Right ventricle myocardium inferior (tissue), 1 donor: ENCODE measurements at regions of chr3 and their contacts with region 1.

Region 1: DNA sequence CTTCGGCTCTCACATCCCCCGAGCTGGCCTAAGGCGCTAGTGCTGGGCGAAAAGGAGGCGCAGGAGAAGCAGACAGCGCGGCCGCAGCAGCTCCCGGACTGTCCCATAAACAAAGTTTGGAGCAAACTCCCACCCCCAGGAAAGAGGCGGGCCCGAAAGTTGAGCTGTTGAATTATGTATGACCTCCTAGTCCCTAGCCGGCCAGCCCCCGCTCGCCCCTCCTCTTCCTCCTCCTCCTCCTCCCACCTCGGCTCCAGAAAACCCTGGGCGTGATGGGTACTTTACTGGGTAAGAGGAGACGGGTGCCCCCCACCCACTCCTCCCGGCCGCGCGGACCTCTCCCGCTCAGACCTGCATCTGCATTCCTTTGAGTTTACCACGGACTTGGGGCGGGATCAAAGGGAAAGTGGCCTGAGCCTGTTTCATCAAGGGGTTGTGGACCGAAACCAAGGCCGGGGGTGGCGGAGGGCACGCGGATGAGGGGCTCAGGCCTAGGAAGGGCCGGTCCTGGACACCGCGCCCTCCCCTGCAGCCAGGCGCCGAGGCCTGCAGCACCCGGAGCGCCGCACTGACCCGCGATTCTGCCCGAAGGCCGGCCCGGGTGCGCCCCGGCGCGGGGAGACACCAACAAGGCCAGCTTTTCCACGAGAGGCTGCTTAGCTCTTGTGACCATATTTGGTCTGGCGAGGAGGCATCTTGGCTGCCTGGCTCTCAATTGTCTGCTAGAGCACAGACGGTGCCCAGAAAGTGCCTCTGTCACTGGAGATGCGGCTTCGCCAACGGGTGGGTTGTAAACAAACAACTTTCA is at the start of gene WWTR1:
- DNase-seq: peak; percentile 95
- ATAC-seq: peak; percentile 93
- total RNA-seq, gene WWTR1: 42.6 TPM

Region 2: GRCh38 chr3:149536429-149536828 is 121.7 kb before region 1 on chr3:
- intact Hi-C with region 1: loop called (anchors 2 kb)
- DNase-seq: peak; percentile 82
- ATAC-seq: peak; percentile 82

Region 3: DNA sequence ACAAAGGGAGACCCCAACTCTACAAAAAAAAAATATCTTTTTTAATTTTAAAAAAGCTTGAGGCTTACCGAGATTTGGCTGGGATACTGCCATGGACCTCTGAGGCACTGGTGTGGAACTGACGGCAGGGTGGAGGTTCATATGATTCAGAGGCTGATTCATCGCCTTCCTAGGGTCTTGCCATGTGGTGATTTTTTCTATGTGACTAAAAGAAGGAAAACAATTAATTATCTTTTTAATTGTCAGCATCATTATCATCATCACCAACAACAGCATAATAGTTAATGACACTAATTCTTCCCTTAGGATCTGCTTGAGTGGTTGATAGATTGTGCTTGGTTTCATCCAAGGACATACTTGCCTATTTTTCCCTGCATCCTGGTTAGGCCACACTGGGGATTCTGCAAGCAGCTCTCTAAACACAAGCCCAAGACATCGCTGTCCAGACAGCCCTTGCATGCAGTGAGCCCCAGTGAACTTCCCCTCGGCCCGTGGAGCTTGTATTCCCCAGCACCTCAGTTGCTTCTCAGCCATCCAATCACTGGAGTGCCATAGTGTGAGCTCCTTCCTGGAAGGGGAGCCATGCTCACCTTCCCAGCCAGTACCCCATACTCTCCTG is 85.2 kb before region 1 on chr3:
- intact Hi-C with region 1: loop called (anchors 2 kb)
- DNase-seq: no peak
- ATAC-seq: peak; percentile 38

Region 4: DNA sequence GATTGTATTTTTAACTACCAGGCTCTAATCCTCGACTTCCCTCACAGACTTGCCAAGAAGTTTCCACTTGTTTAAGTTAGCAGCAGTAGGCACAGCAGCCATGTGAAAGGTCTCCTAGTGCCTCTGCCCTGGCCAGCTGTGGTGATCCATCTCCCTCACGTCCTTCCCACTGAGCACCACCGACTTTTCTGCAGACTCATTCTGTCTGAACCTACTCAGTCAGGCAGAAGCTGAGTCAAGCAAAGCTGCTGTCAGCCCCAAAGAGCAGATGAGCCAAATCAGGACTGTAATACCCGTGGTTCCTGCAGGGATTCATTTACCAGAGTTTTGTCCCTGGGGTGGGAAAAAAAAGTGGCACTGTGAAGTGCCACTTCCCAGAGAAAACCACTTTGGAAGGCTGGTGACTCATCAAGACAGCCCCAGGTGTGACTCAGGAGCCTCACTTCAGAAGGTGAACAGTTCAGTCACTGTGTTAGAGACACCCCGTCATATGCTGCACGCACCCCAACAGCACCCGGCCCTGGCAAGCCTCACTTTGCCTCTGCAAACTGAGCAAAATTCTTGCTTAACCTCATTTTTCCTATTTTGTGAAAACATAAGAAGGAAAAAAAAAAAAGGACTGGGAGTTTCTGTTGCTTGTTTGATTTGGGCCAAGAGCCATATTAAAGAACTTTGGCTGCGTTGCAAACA is 76.3 kb before region 1 on chr3:
- intact Hi-C with region 1: loop called (anchors 5 kb)
- DNase-seq: no peak
- ATAC-seq: peak; percentile 67

Region 5: DNA sequence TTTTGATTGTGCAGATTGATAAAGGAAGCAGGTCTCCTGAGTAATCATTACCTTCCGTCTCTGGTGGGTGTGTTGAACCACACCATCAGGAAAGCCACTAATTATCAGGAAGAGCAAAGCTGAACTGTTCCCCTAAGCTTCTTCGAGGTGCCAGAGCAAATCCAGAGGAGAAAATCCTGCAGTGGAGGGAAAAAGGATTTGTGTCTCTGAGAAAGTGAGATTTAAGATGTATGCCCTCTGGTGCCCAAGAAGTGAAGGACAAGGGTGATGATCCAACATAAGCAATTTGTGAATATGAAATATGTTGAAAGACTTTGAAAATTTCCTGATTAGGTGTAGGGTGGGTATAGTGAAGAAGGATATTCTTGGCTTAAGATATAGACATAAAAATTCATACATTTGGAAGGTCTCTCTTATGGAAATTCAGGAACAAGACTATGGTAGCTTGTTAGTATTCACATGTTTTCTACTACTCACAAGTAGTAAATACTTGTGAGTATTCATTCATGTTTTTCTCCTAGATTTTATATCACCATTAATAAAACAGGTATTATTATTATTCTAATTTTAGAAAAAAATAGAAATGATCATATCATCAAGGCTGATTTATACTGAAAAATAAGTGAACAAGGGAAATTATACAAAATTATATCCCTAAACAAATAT is 59.4 kb after region 1 on chr3:
- intact Hi-C with region 1: loop called (anchors 2 kb)
- DNase-seq: no peak
- ATAC-seq: peak; percentile 57

Region 6: DNA sequence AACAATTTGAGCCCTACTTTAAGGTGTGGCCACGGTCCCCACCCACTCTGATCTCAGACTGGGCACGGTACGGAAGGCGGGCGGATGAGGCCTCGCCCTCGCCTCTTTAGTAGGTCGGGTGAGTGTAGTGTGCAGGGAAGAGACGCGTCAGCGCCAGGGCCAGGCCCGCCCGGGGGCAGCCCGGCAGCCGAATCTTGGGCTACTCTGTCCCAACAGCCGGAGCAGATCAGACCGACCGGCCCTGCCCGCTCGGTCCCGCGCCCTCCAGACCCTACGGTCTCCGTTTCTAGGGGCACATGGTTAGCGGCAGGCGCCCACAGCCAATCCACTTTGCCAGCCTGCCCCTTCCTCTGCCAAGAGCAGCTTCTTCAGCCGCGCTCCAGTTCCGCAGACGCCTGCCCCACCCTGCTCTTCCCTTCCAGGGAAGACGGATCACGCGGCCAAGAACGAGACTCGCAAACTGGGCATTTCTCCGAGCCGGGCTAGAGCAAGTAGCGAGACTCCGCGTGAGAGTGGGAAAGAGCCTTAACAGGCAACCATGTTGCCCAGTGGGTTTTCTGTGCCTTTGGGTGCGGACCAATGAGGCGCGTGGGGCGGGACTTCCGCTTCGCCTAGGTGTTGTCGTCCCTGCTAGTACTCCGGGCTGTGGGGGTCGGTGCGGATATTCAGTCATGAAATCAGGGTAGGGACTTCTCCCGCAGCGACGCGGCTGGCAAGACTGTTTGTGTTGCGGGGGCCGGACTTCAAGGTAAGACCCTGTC is 154.7 kb after region 1 on chr3 and contains the start of gene RNF13:
- intact Hi-C with region 1: loop called (anchors 1 kb)
- DNase-seq: peak; percentile 99
- ATAC-seq: peak; percentile 96
- total RNA-seq, gene RNF13: 45.5 TPM